ENCODE measurements at regions of chr1 and their contacts with region 1.

Region 1: DNA sequence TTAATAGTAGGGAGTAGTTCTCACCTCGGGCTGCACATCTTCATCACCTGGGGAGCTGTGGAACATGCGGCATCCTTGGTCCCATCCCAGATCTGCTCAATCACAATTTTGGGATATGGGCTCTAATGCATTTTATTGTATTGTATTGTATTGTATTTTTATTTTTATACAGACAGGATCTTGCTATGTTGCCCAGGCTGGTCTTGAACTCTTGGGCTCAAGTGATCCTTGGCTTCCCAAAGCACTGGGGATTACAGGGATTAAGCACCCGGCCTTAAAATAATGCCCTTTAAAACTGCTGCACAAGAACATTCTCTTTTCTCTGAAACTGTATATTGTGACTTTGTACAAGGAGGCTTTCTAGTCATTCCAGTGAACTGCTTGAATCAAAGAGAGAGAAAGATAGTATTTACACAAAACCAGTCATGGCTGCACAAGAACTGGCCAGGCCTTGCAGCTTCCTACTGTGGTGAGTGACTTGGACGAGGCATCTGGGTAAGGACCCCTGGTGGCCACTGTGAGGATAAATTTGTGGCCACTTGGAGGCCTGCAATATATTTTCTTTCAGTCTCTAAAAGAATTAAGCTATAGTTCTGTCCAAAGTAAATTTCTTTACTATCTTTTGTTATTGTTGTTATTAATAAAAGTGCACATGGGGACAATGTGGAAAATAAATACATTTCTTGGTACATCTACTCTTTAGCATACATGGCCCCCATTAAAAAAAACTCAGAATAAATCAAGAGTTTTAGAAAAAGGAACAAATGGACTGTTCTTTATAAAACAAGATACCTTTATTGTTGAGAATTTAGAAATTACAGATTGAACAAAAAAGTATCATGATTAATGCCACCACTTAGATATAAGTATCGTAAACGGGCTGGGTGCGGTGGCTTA is 48.0 kb downstream of the TBCE start:
- DNase-seq: peak; percentile 76
- H3K4me3 ChIP-seq: no peak overlapping the region
- H3K4me1 ChIP-seq: no peaks in the 10 kb centered on the region
- H3K27me3 ChIP-seq: no peaks in the 10 kb centered on the region

Region 2: DNA sequence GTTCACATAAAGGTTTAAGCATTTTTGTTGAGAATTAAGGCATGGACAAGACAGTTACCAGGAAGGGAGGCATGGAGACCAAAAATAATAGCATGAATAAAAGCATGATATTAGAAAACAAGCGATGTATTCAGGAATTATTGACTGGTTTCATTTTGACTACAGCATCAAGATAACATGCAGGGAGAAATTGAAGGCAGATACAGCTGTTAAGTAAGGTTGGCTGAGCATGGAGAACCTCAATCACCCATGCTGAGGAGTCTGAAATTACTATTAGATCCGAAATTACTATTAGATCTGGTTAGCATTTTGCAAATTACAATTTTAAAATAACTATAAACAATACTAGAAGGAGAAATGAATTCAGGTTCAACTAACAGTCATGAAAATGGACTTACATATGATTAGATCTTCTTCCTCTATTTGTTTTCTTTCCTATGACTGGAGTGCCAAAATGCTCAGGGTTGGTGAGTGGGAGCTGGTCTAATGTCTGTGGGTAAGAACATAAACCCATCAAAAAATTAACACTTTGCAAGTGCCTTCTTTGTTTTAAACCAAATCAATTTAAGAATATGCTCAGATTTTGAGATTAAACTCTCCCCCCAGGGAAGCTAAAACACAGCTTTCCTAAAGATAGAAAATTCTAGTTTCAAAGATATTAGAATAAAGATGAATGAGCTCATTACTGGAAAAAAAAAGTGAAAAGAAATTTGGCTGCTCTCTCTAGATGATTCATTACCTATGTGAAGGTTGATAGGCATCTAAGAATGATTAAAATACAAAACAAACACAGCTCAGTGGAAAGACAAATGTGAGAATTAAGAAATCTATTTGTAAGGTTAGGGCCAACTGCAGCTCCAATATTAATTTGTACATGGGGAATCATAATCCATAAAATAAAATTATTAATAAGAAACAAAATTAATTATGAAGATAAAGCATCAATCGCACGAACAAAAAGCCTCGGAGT is 168.9 kb before region 1 on chr1:
- in situ Hi-C with region 1: loop called (anchors 10 kb)
- DNase-seq: no peak
- H3K4me3 ChIP-seq: no peak overlapping the region
- H3K4me1 ChIP-seq: no peaks in the 10 kb centered on the region
- H3K27me3 ChIP-seq: no peaks in the 10 kb centered on the region